ENCODE measurements at regions of chr6 and their contacts with region 1.

Region 1: GRCh38 chr6:16591396-16592222 is 169.7 kb downstream of the ATXN1 start:
- DNase-seq: peak; percentile 46
- H3K4me3 Mint-ChIP-seq: no peak overlapping the region
- H3K27ac Mint-ChIP-seq: peak overlapping the region; percentile 48
- H3K4me1 Mint-ChIP-seq: peaks cover 18% of the 10 kb centered on the region
- H3K27me3 Mint-ChIP-seq: no peaks in the 10 kb centered on the region

Region 2: DNA sequence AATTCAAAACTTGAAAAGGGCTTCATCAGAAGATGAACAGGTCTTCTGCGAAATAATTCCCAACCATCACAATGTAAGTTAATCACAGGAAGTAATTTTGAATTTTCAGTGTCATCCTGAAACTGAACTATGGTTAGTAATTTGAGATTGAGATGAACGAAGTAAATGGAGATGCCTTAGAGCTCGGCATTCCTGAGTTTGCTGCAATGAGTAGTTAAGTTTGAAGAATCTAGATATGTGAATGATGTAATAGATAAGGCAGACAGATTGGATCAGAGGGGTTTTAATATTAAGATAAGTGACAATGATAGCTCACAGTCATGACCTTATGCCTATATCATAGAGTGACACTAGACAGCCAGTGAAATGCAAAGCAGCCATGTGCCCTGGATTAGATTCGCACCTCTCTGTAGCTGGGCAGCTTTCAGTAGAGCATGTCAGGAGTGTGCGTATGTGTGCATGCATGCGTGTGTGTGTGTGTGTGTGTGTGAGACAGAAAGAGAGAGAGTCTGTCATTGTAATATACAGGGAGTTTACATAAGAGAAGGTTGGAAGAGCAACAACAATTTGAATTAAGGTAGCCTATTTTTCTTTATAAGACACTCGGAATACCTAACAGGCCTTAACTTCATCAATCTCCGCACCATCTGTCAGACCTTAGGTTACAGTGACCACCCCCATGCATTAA is 120.2 kb before region 1 on chr6:
- CTCF ChIA-PET with region 1: no interaction called
- intact Hi-C with region 1: loop called (anchors 1 kb)
- DNase-seq: no peak
- H3K4me3 Mint-ChIP-seq: no peak overlapping the region
- H3K27ac Mint-ChIP-seq: peak overlapping the region; percentile 68
- H3K4me1 Mint-ChIP-seq: peaks cover 60% of the 10 kb centered on the region
- H3K27me3 Mint-ChIP-seq: no peaks in the 10 kb centered on the region

Region 3: DNA sequence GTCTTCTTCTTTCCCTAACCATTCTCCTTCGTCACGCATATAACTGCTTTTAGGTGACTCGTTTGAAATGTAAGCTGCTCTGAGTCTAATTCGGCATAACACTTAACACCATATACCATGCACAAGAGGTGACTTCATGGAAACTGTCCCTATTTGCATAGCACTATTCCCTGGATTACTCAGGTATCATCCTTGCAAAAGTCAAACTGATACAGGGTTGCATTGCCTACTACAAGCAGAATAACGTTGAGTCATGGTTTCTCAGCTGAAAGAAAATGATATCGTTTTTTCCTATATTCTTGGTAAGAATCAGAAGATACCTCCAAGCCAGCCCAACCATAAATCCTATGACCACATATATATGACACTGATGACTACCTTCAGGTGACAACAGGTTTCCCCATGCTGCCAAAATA is 57.9 kb before region 1 on chr6:
- CTCF ChIA-PET with region 1: interaction called, 5 read pairs
- intact Hi-C with region 1: loop called (anchors 1 kb)
- DNase-seq: peak; percentile 22
- H3K4me3 Mint-ChIP-seq: no peak overlapping the region
- H3K27ac Mint-ChIP-seq: no peak overlapping the region
- H3K4me1 Mint-ChIP-seq: peaks cover 21% of the 10 kb centered on the region
- H3K27me3 Mint-ChIP-seq: no peaks in the 10 kb centered on the region

Region 4: DNA sequence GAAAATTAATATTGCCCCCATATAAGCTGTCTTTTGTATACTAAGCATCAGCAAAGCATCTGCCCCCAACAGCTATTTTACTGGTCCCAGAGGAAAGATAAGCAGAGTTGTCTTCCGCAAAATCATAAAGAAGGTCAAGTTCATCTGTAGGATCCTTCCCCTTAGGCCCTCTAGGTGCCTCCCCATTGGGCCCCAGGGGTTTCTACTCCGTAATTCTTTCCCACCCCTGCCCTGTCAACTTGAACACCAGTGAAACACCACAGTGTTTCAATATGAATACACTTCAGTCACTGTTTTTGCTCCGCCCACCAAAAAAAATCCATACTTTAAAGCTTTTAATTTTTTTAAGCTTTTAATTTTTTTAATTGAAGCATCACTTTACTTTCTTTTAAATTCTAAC is 10.4 kb after region 1 on chr6:
- CTCF ChIA-PET with region 1: interaction called, 8 read pairs
- intact Hi-C with region 1: loop called (anchors 1 kb)
- DNase-seq: peak; percentile 73
- H3K4me3 Mint-ChIP-seq: no peak overlapping the region
- H3K27ac Mint-ChIP-seq: no peak overlapping the region
- H3K4me1 Mint-ChIP-seq: peaks cover 30% of the 10 kb centered on the region
- H3K27me3 Mint-ChIP-seq: no peaks in the 10 kb centered on the region

Region 5: DNA sequence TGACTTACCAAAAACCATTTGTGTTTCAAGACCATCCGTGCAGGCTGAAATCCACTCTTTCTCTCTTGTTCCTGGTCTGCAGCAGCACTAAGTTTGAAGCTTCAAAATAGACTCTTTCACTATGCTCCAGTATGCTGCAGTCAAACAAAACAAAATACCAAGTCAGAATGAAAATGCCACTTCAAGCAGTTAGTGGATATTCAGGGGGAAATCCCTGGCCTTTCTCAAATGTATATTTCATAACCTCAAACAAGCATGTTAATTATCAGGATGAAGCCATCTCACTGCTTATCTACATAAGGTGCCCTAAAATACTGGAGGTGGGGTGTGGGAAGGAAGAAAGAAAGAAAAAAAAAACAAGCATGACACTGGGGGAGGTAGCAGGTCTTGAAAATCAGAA is 66.2 kb after region 1 on chr6:
- CTCF ChIA-PET with region 1: interaction called, 4 read pairs
- intact Hi-C with region 1: loop called (anchors 1 kb)
- DNase-seq: peak; percentile 9
- H3K4me3 Mint-ChIP-seq: peak overlapping the region; percentile 2
- H3K27ac Mint-ChIP-seq: peak overlapping the region; percentile 32
- H3K4me1 Mint-ChIP-seq: peaks cover 43% of the 10 kb centered on the region
- H3K27me3 Mint-ChIP-seq: no peaks in the 10 kb centered on the region

Region 6: DNA sequence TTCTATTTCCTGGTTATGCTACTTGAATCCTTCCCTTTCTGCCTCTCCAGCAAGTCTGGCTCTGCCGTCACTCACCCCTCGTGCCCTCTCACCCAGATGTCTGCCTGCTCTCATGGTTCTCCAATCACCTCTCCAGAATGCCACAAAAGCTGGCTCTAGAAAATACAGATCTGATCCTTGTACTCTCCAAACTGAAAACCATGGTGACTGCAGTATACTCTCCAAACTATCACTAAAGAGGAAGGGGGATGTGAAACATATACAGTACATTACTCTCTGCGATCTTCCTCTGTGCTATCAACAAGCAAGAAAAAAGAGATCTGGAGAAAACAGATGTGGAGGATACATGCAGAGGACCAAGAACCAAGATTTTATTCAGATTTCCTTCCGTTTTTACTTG is 78.6 kb after region 1 on chr6:
- CTCF ChIA-PET with region 1: no interaction called
- intact Hi-C with region 1: loop called (anchors 1 kb)
- DNase-seq: no peak
- H3K4me3 Mint-ChIP-seq: no peak overlapping the region
- H3K27ac Mint-ChIP-seq: peak overlapping the region; percentile 25
- H3K4me1 Mint-ChIP-seq: peaks cover 38% of the 10 kb centered on the region
- H3K27me3 Mint-ChIP-seq: no peaks in the 10 kb centered on the region

Region 7: DNA sequence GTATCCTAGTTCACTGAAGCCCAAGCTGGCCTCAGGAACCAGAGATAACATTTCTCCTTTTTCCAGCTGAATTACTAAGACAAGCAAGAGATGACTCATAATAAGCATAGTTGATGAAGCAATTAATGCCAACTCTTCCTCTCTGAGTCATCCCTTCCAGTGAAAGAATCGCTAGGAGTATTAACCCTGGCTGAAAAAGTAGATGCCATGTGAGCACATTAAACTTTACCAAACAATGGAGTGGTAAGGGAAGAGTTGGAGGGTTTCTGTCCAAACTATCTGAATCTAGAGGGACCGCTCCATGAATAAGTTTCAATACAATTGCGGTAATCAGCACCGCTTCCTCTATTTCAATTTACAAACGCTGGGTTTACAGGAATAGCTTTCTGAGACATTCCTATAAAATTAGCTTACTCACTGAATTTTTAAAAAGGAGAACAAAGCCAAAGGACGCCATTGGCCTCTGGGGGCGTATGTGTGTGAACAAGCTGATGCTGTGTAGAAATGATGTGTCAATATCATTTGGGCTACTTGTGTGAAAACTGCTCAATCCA is 121.4 kb after region 1 on chr6:
- CTCF ChIA-PET with region 1: interaction called, 4 read pairs
- intact Hi-C with region 1: loop called (anchors 1 kb)
- DNase-seq: peak; percentile 23
- H3K4me3 Mint-ChIP-seq: peak overlapping the region; percentile 51
- H3K27ac Mint-ChIP-seq: peak overlapping the region; percentile 75
- H3K4me1 Mint-ChIP-seq: peaks cover 29% of the 10 kb centered on the region
- H3K27me3 Mint-ChIP-seq: no peaks in the 10 kb centered on the region